ENCODE measurements at regions of chr9 and their contacts with region 1.

Region 1: DNA sequence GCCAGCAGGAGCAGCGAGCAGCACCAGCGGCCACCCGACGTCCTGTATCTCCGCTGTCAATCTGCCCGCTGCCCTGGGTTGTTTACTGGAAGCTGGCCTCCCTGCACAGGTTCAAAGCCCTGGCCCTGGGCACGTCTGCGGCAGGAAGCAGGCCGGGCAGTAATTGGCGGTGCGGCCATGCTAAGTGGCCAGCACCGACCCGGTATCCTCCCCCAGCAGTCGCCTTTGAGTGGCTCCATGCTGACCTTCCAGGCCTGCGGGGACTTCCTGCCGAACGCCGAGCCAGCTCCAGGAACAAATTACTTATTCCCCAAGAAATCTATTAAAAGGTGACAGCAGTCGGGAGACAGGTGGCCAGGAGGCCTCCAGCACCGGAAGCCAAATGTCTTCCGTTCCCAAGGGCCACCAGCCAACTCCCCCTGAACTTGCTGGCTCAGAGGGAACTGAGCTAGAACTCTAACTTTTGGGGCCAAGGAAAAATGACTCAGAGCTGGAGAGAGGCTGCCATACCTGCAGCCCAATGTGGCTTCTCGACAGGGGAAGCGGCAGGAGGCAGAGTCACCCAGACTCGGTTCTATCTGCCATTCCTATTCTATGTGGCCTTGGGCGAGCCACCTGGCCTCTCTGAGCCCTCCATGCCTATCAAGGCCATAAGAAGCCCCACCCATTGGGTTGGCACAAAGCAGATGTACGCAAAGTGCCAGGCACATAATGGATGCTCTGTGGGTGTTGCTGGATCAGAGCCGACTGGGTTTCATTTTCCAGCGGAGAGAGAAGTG is 13.7 kb upstream of the PSMB7 start:
- DNase-seq: peak in 1 of 5 donors; percentile 10
- ATAC-seq: no peak
- H3K4me3 ChIP-seq: no peak overlapping the region
- H3K27ac ChIP-seq: no peak overlapping the region
- H3K4me1 ChIP-seq: no peaks in the 10 kb centered on the region
- H3K27me3 ChIP-seq: no peaks in the 10 kb centered on the region
- CTCF ChIP-seq: no peak
- POLR2A ChIP-seq: no peak

Region 2: GRCh38 chr9:123893831-123894460 is 535.0 kb before region 1 on chr9:
- intact Hi-C with region 1: no loop called
- DNase-seq: no peak
- ATAC-seq: no peak
- H3K4me3 ChIP-seq: no peak overlapping the region
- H3K27ac ChIP-seq: no peak overlapping the region
- H3K4me1 ChIP-seq: peaks cover 0 to 21% (median 0%) of the 10 kb centered on the region in 12 donors
- H3K27me3 ChIP-seq: no peaks in the 10 kb centered on the region
- CTCF ChIP-seq: no peak
- POLR2A ChIP-seq: no peak

Region 3: GRCh38 chr9:124480621-124480981 is 51.7 kb after region 1 on chr9:
- intact Hi-C with region 1: loop called in 1 of 10 experiments (anchors 5 kb)
- DNase-seq: peak in 2 of 5 donors; percentile 20 to 56
- ATAC-seq: peak in 3 of 4 donors; percentile 41 to 46 (median 42)
- H3K4me3 ChIP-seq: no peak overlapping the region
- H3K27ac ChIP-seq: no peak overlapping the region
- H3K4me1 ChIP-seq: peaks cover 0 to 15% (median 2%) of the 10 kb centered on the region in 12 donors
- H3K27me3 ChIP-seq: peaks cover 13 to 82% (median 36%) of the 10 kb centered on the region in 9 donors
- CTCF ChIP-seq: peak in 9 of 12 donors; percentile 5 to 45 (median 24)
- POLR2A ChIP-seq: no peak

Measured in heart left ventricle (tissue), 16 donors.